Activated T-helper 2 cell treated with anti-CD3 and anti-CD28 coated beads, Interferon-gamma antibody, Interleukin-2, Interleukin-4, amounts not matched to agents 10 μg/mL and 5 μg/mL and 100 μg/mL, durations not matched to agents 14 hours and 24 hours and 36 hours (primary cell): ENCODE measurements at regions of chr4 and their contacts with region 1.

Region 1: GRCh38 chr4:15238720-15239119 is 189.1 kb upstream of the C1QTNF7 start:
- DNase-seq: no peak
- H3K4me3 Mint-ChIP-seq: no peak overlapping the region
- H3K27ac Mint-ChIP-seq: no peak overlapping the region
- H3K4me1 Mint-ChIP-seq: peaks cover 24% of the 10 kb centered on the region
- H3K27me3 Mint-ChIP-seq: no peaks in the 10 kb centered on the region

Region 2: GRCh38 chr4:15396157-15396800 is 157.6 kb after region 1 on chr4:
- intact Hi-C with region 1: loop called (anchors 1 kb)
- DNase-seq: peak; percentile 46
- H3K4me3 Mint-ChIP-seq: no peak overlapping the region
- H3K27ac Mint-ChIP-seq: no peak overlapping the region
- H3K4me1 Mint-ChIP-seq: peaks cover 16% of the 10 kb centered on the region
- H3K27me3 Mint-ChIP-seq: no peaks in the 10 kb centered on the region

Region 3: GRCh38 chr4:15457406-15458201 is 218.9 kb after region 1 on chr4:
- intact Hi-C with region 1: loop called (anchors 1 kb)
- DNase-seq: no peak
- H3K4me3 Mint-ChIP-seq: no peak overlapping the region
- H3K27ac Mint-ChIP-seq: no peak overlapping the region
- H3K4me1 Mint-ChIP-seq: no peaks in the 10 kb centered on the region
- H3K27me3 Mint-ChIP-seq: peaks cover 25% of the 10 kb centered on the region

Region 4: GRCh38 chr4:15479089-15479912 is 240.6 kb after region 1 on chr4:
- intact Hi-C with region 1: no loop called
- DNase-seq: no peak
- H3K4me3 Mint-ChIP-seq: no peak overlapping the region
- H3K27ac Mint-ChIP-seq: no peak overlapping the region
- H3K4me1 Mint-ChIP-seq: no peaks in the 10 kb centered on the region
- H3K27me3 Mint-ChIP-seq: no peaks in the 10 kb centered on the region

Region 5: GRCh38 chr4:15649914-15650545 is 411.3 kb after region 1 on chr4:
- intact Hi-C with region 1: loop called (anchors 2 kb)
- DNase-seq: peak; percentile 56
- H3K4me3 Mint-ChIP-seq: peak overlapping the region; percentile 3
- H3K27ac Mint-ChIP-seq: peak overlapping the region; percentile 57
- H3K4me1 Mint-ChIP-seq: peaks cover 50% of the 10 kb centered on the region
- H3K27me3 Mint-ChIP-seq: no peaks in the 10 kb centered on the region

Region 6: DNA sequence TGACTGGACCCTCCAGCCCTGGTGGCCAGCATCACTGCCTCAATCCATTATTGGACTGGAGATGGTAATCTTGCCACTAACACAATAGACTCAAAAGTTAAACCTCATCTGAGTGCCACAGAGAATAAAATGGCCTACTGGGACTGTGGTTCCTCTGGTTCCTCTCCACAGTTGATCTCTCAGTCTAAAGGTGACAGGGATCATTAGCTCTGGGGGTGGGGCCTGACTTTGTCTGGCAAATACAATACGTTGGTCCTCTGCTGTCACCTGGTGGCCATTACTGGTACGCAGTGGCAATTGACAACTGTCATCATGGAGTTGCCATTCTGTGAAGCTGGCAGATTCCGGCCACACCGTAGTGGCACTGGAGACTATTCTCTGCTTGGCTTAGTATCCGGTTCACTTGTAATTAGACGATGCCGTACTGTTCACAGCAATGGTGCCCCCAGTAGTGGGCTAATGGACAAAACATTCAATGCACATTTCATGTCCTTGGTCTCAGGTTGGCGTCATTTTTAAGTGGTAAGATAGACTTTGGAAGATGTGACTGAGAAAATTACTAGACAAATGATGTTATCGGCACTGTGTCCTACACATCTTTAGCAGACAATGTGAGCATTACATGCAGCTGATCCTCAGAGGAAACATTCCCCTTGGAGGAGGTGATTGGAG is 717.6 kb after region 1 on chr4:
- intact Hi-C with region 1: loop called (anchors 5 kb)
- DNase-seq: peak; percentile 68
- H3K4me3 Mint-ChIP-seq: no peak overlapping the region
- H3K27ac Mint-ChIP-seq: no peak overlapping the region
- H3K4me1 Mint-ChIP-seq: peaks cover 6% of the 10 kb centered on the region
- H3K27me3 Mint-ChIP-seq: peaks cover 14% of the 10 kb centered on the region